IMR-90 (cell line): ENCODE measurements at regions of chr5 and their contacts with region 1.

Region 1: GRCh38 chr5:180784497-180785097 is 18.0 kb downstream of the MGAT1 start:
- DNase-seq: peak; percentile 87
- ATAC-seq: peak; percentile 66
- H3K4me3 ChIP-seq: no peak overlapping the region
- H3K27ac ChIP-seq: no peak overlapping the region; the same call in 1 of the 2 replicates
- H3K4me1 ChIP-seq: peaks cover 30% of the 10 kb centered on the region
- H3K27me3 ChIP-seq: no peaks in the 10 kb centered on the region
- CTCF ChIP-seq: peak; percentile 92
- POLR2A ChIP-seq: no peak
- RAD21 ChIP-seq: peak; percentile 92

Region 2: GRCh38 chr5:180353048-180353979 is 431.3 kb before region 1 on chr5 and contains the start of gene GFPT2:
- CTCF ChIA-PET with region 1: no interaction called
- POLR2A ChIA-PET with region 1: no interaction called
- dilution Hi-C with region 1: no loop called
- in situ Hi-C with region 1: no loop called
- intact Hi-C with region 1: loop called (anchors 2 kb)
- DNase-seq: peak; percentile 64
- ATAC-seq: peak; percentile 93
- H3K4me3 ChIP-seq: peak within 1 kb of the TSS; percentile 83
- H3K27ac ChIP-seq: no peak within 1 kb of the TSS; the same call in 1 of the 2 replicates
- H3K4me1 ChIP-seq: no peaks in the 10 kb centered on the region; the same call in 1 of the 2 replicates
- H3K27me3 ChIP-seq: peaks cover 13% of the 10 kb centered on the region; the same call in 1 of the 2 replicates
- CTCF ChIP-seq: no peak
- POLR2A ChIP-seq: peak; percentile 93
- RAD21 ChIP-seq: no peak
- total RNA-seq, gene GFPT2: 20.6 and 20.8 TPM in 2 replicates

Region 3: GRCh38 chr5:180441563-180441962 is 343.0 kb before region 1 on chr5:
- CTCF ChIA-PET with region 1: no interaction called
- POLR2A ChIA-PET with region 1: no interaction called
- dilution Hi-C with region 1: no loop called
- in situ Hi-C with region 1: no loop called
- intact Hi-C with region 1: no loop called
- DNase-seq: no peak
- ATAC-seq: no peak
- H3K4me3 ChIP-seq: no peak overlapping the region
- H3K27ac ChIP-seq: no peak overlapping the region
- H3K4me1 ChIP-seq: no peaks in the 10 kb centered on the region
- H3K27me3 ChIP-seq: no peaks in the 10 kb centered on the region
- CTCF ChIP-seq: no peak
- POLR2A ChIP-seq: no peak
- RAD21 ChIP-seq: no peak

Region 4: GRCh38 chr5:180831139-180832048 is 46.8 kb after region 1 on chr5:
- CTCF ChIA-PET with region 1: no interaction called
- POLR2A ChIA-PET with region 1: no interaction called
- dilution Hi-C with region 1: no loop called
- in situ Hi-C with region 1: no loop called
- intact Hi-C with region 1: no loop called
- DNase-seq: peak; percentile 60
- ATAC-seq: peak; percentile 98
- H3K4me3 ChIP-seq: peak overlapping the region; percentile 90
- H3K27ac ChIP-seq: peak overlapping the region; percentile 89
- H3K4me1 ChIP-seq: peaks cover 9% of the 10 kb centered on the region
- H3K27me3 ChIP-seq: no peaks in the 10 kb centered on the region
- CTCF ChIP-seq: no peak
- POLR2A ChIP-seq: no peak
- RAD21 ChIP-seq: no peak

Region 5: GRCh38 chr5:180848878-180849277 is 64.3 kb after region 1 on chr5:
- CTCF ChIA-PET with region 1: no interaction called
- POLR2A ChIA-PET with region 1: no interaction called
- dilution Hi-C with region 1: no loop called
- in situ Hi-C with region 1: no loop called
- intact Hi-C with region 1: no loop called
- DNase-seq: no peak
- ATAC-seq: no peak
- H3K4me3 ChIP-seq: no peak overlapping the region
- H3K27ac ChIP-seq: no peak overlapping the region
- H3K4me1 ChIP-seq: no peaks in the 10 kb centered on the region
- H3K27me3 ChIP-seq: no peaks in the 10 kb centered on the region
- CTCF ChIP-seq: no peak
- POLR2A ChIP-seq: no peak
- RAD21 ChIP-seq: no peak

Region 6: GRCh38 chr5:180860887-180861822 is 76.6 kb after region 1 on chr5 and contains the start of gene ZFP62:
- CTCF ChIA-PET with region 1: interaction called, 3 read pairs
- POLR2A ChIA-PET with region 1: no interaction called
- dilution Hi-C with region 1: no loop called
- in situ Hi-C with region 1: no loop called
- intact Hi-C with region 1: loop called (anchors 2 kb)
- DNase-seq: peak; percentile 87
- ATAC-seq: peak; percentile 97
- H3K4me3 ChIP-seq: peak within 1 kb of the TSS; percentile 96
- H3K27ac ChIP-seq: peak within 1 kb of the TSS; percentile 95
- H3K4me1 ChIP-seq: no peaks in the 10 kb centered on the region
- H3K27me3 ChIP-seq: no peaks in the 10 kb centered on the region
- CTCF ChIP-seq: no peak
- POLR2A ChIP-seq: peak; percentile 43; the same call in 1 of the 2 replicates
- RAD21 ChIP-seq: no peak
- total RNA-seq, gene ZFP62: 20.3 and 29.7 TPM in 2 replicates

Region 7: GRCh38 chr5:181151146-181151545 is 366.5 kb after region 1 on chr5:
- CTCF ChIA-PET with region 1: no interaction called
- POLR2A ChIA-PET with region 1: no interaction called
- dilution Hi-C with region 1: no loop called
- in situ Hi-C with region 1: loop called (anchors 5 kb)
- intact Hi-C with region 1: no loop called
- DNase-seq: no peak
- ATAC-seq: 0 out of 2 replicates have a peak, but pooled peaks have one; percentile 11
- H3K4me3 ChIP-seq: no peak overlapping the region
- H3K27ac ChIP-seq: no peak overlapping the region
- H3K4me1 ChIP-seq: no peaks in the 10 kb centered on the region; the same call in 1 of the 2 replicates
- H3K27me3 ChIP-seq: no peaks in the 10 kb centered on the region; the same call in 1 of the 2 replicates
- CTCF ChIP-seq: no peak
- POLR2A ChIP-seq: no peak
- RAD21 ChIP-seq: no peak

Region 8: DNA sequence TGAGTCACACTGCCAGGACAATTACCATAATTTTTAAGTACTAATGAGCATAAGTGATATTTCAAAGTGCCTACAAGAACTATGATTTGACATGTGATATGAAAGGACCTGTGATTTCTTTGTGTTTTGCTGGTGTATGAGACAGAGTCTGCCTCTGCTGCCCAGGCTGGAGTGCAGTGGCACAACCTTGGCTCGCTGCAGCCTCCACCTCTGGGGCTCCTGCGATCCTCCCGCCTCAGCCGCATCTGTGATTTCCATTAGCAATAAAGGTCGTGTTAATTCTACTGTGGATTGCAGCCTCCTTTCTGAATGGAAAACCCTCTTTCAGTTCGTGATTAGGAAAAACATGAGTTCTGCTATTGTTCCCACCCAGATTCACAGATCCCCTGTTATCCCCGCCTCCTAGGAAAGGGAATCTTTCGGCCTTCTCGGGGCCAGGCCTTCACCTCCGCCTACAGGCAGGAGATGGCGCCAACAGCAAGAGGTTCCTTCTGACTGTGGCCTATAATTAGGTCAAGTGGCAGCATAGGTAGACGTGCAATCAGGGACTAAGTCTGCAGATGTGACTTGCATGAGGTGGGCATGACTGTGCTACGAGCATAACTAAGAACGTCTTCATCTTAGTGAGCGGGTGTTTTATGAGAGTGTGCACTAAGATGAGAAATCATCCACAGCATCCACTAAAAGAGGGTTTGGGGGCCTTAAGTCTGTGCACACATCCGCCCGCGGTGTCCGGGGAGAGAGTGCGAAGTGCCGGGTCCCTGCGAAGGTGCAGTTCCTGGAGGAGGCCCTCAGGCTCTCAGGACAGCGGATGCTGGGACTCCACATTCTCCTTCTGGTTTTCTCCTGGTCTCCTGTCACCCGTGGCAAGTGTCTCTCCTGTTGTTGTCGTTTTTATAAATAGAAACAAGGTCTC is 397.3 kb after region 1 on chr5:
- CTCF ChIA-PET with region 1: no interaction called
- POLR2A ChIA-PET with region 1: no interaction called
- dilution Hi-C with region 1: no loop called
- in situ Hi-C with region 1: no loop called
- intact Hi-C with region 1: loop called (anchors 2 kb)
- DNase-seq: peak; percentile 65
- ATAC-seq: peak; percentile 69
- H3K4me3 ChIP-seq: no peak overlapping the region
- H3K27ac ChIP-seq: no peak overlapping the region
- H3K4me1 ChIP-seq: no peaks in the 10 kb centered on the region
- H3K27me3 ChIP-seq: no peaks in the 10 kb centered on the region
- CTCF ChIP-seq: peak; percentile 80
- POLR2A ChIP-seq: no peak
- RAD21 ChIP-seq: peak; percentile 79